ENCODE measurements at regions of chr1 and their contacts with region 1.

Region 1: DNA sequence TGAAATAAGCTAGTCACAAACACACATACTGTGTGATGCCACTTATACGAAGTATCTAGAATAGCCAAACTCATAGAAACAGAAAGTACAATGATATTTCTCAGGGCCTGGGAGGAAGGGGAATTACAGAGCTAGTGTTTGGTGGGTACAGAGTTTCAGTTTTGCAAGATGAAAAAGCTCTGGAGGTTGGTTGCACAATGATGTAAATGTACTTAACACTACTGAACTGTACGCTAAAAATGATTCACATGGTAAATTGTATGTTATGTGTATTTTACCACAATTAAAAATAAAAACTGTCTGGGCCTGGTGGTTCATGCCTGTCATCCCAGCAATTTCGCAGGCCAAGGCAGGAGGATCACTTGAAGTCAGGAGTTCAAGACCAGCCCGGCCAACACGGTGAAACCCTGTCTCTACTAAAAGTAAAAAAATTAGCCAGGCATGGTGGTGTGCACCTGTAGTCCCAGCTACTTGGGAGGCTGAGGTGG is 15.3 kb upstream of the FHAD1 start:
- DNase-seq: peak; percentile 42
- ATAC-seq: peak; percentile 99
- H3K4me3 Mint-ChIP-seq: no peak overlapping the region
- H3K27ac Mint-ChIP-seq: no peak overlapping the region
- H3K4me1 Mint-ChIP-seq: peaks cover 18% of the 10 kb centered on the region
- H3K27me3 Mint-ChIP-seq: peaks cover 18% of the 10 kb centered on the region

Region 2: GRCh38 chr1:15264769-15265168 is 33.0 kb after region 1 on chr1:
- CTCF ChIA-PET with region 1: no interaction called
- POLR2A ChIA-PET with region 1: no interaction called
- intact Hi-C with region 1: no loop called
- DNase-seq: no peak
- ATAC-seq: no peak
- H3K4me3 Mint-ChIP-seq: no peak overlapping the region
- H3K27ac Mint-ChIP-seq: no peak overlapping the region
- H3K4me1 Mint-ChIP-seq: peaks cover 18% of the 10 kb centered on the region
- H3K27me3 Mint-ChIP-seq: peaks cover 38% of the 10 kb centered on the region

Region 3: DNA sequence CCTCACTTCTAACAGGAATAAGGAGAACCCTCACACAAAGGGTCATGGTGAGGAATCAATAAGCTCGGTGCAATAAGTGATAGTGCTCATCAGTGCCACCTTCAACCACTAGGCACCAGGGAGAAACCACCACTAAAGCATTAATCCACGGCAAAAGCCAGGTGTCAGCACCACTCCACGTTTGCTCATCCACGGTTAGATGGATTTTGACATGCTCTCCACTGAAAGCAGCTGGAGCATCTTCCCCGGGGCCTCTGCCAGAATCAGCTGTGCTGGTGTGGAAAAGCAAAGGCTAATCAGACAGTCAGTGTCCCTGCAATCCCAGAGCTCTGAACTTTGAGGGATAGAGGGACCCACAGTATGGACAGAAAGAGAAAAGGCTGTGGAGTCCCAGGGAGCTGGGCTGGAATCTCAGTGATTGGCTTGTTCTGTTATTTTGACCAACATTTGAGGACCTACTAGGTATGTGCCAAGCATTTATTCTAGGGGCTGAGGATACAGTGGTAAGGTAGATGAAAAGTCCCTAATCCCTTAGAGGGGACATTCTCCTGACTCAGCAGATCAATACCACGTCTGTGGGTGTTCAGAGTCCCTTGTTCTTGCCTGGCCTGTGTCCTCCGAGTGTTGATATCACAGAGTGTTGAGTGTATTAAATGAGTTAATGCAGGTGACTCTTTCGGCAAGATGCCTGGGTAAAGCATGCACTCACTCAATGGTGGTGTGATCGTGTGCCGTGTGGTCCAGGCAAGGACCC is 56.6 kb after region 1 on chr1:
- CTCF ChIA-PET with region 1: no interaction called
- POLR2A ChIA-PET with region 1: no interaction called
- intact Hi-C with region 1: loop called in 1 of 2 experiments (anchors 1 kb)
- DNase-seq: no peak
- ATAC-seq: no peak
- H3K4me3 Mint-ChIP-seq: no peak overlapping the region
- H3K27ac Mint-ChIP-seq: no peak overlapping the region
- H3K4me1 Mint-ChIP-seq: peaks cover 12% of the 10 kb centered on the region
- H3K27me3 Mint-ChIP-seq: peaks cover 14% of the 10 kb centered on the region

Measured in activated CD4-positive, alpha-beta T cell treated with anti-CD3 and anti-CD28 coated beads for 36 hours (primary cell).